Heart left ventricle (tissue), 16 donors: ENCODE measurements at regions of chr15 and their contacts with region 1.

Region 1: DNA sequence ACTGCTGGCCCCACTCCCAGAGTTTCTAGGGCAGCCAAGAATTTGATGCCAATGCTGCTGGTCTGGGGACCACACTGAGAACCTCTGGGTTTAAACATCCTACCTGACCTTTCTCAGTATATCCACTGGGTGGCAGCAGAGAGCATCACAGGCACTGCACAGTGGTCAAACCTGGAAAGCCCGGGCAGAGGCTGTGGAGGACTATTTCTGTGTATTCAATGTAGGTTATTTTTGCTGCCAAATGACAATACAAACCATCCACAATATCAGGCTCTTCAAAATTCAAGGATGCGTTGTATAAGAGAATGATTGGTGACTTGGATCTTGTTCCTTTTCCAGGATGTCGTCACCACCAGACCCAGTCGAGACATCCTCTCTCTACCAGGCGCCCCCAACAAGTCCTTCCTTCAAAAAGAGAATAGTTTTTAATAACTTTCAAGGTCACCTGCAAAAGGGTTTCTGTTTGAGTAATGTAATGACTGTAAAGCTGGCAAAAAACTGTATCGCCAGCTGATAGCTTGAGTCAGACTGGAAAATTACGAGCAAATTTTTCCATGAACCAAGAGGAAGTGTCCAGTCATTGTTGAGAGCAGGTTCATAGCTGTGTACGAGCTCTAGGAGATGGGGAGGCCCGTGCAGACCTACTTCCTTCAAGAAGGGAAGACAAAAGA is 30.5 kb upstream of the MYZAP start:
- DNase-seq: peak; percentile 70 to 82 (median 80)
- ATAC-seq: peak; percentile 84 to 92 (median 88)
- H3K4me3 ChIP-seq: peak overlapping the region in 5 of 12 donors; percentile 1 to 36 (median 18)
- H3K27ac ChIP-seq: peak overlapping the region; percentile 6 to 82 (median 72)
- H3K4me1 ChIP-seq: peaks cover 0 to 36% (median 20%) of the 10 kb centered on the region in 12 donors
- H3K27me3 ChIP-seq: no peaks in the 10 kb centered on the region
- CTCF ChIP-seq: peak; percentile 84 to 97 (median 93)
- POLR2A ChIP-seq: no peak

Region 2: GRCh38 chr15:57604507-57604906 is 43.3 kb after region 1 on chr15:
- intact Hi-C with region 1: loop called in 2 of 10 experiments (anchors 5 kb)
- DNase-seq: peak in 2 of 5 donors; percentile 68 to 78
- ATAC-seq: peak; percentile 12 to 72 (median 48)
- H3K4me3 ChIP-seq: peak overlapping the region in 3 of 12 donors; percentile 0 to 27 (median 11)
- H3K27ac ChIP-seq: peak overlapping the region; percentile 29 to 96 (median 92)
- H3K4me1 ChIP-seq: peaks cover 0 to 84% (median 23%) of the 10 kb centered on the region in 12 donors
- H3K27me3 ChIP-seq: no peaks in the 10 kb centered on the region
- CTCF ChIP-seq: no peak
- POLR2A ChIP-seq: no peak

Region 3: DNA sequence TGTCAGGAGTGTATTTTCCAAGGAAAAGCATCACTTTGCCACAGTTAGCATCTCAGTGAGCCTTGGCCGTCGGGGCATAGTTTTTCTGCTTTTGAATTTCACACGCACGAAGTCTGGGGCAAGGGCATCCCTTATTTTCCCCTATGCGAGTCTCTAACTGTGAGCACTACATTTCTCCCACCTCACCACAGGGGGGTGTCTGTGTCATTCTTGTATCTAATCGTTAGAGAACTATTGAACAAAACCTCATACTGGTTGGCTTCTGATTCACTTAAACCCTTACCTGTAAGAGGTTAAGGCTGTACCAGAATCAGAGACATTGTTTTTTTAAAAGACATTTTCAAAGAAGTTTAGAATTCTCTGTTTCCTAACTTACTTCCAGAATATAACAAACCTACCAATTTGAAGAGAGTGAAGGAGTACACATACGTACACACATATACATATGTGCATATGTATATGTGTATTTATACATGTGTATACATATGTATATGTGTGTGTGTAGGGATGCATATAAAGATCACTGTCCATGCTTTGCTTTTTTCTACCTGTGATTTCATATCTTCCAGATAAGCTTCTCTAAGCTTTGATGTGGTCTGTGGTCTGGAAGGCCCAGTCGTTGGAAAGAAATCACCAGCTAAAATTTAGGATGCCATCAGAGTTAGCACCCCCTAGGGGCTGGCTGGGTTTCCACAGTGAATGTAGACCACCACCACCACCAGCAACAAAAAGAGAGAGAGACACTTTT is 79.9 kb after region 1 on chr15:
- intact Hi-C with region 1: loop called in 6 of 10 experiments (anchors 5 kb)
- DNase-seq: no peak
- ATAC-seq: peak in 3 of 4 donors; percentile 28 to 57 (median 39)
- H3K4me3 ChIP-seq: no peak overlapping the region
- H3K27ac ChIP-seq: peak overlapping the region in 2 of 12 donors; percentile 7 to 82
- H3K4me1 ChIP-seq: peaks cover 0 to 41% (median 10%) of the 10 kb centered on the region in 12 donors
- H3K27me3 ChIP-seq: no peaks in the 10 kb centered on the region
- CTCF ChIP-seq: peak in 7 of 12 donors; percentile 9 to 39 (median 26)
- POLR2A ChIP-seq: no peak

Region 4: GRCh38 chr15:57706405-57707209 is 145.4 kb after region 1 on chr15 and contains the start of gene POLR2M:
- intact Hi-C with region 1: loop called in 7 of 10 experiments (anchors 2 to 10 kb)
- DNase-seq: peak; percentile 95 to 97 (median 97)
- ATAC-seq: peak; percentile 89 to 94 (median 94)
- H3K4me3 ChIP-seq: peak within 1 kb of the TSS; percentile 70 to 99 (median 88)
- H3K27ac ChIP-seq: peak within 1 kb of the TSS; percentile 91 to 99 (median 98)
- H3K4me1 ChIP-seq: peaks cover 4 to 43% (median 31%) of the 10 kb centered on the region in 12 donors
- H3K27me3 ChIP-seq: no peaks in the 10 kb centered on the region
- CTCF ChIP-seq: no peak
- POLR2A ChIP-seq: peak in 1 of 2 donors; percentile 65
- total RNA-seq, gene POLR2M: 23.6 to 243 (median 52.8) TPM

Region 5: DNA sequence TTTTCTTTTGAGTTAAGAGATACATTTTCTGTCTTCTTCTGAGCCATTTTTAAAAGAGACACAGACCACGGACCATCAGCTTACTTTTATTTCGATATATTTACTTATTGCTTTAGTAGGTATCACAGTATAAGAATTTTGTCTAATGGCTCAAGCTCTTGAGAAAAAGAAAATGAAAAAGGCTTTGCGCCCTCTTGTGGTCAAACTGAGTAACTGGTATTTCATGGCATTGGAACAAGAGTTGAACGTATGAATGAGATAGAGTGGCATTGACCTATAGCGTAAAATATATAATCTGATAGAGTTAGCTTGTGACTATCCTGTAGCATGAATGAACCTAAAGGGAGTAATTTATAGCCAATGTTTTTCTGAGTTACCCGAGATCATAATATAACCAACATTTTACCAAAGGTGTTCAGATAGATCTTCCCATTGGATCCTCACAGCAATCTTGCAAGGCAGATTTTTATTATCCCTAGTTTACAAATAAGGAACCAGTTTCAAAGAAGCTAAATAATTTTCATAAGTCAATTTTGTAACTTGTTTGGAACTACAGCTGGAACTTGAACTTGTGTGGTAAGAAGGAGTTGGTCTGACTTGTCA is 300.0 kb after region 1 on chr15:
- intact Hi-C with region 1: loop called in 9 of 10 experiments (anchors 2 to 10 kb)
- DNase-seq: peak in 2 of 5 donors; percentile 29 to 38
- ATAC-seq: peak in 2 of 4 donors; percentile 14 to 41
- H3K4me3 ChIP-seq: no peak overlapping the region
- H3K27ac ChIP-seq: no peak overlapping the region
- H3K4me1 ChIP-seq: peaks cover 0 to 9% (median 0%) of the 10 kb centered on the region in 12 donors
- H3K27me3 ChIP-seq: no peaks in the 10 kb centered on the region
- CTCF ChIP-seq: peak; percentile 72 to 92 (median 84)
- POLR2A ChIP-seq: no peak

Region 6: DNA sequence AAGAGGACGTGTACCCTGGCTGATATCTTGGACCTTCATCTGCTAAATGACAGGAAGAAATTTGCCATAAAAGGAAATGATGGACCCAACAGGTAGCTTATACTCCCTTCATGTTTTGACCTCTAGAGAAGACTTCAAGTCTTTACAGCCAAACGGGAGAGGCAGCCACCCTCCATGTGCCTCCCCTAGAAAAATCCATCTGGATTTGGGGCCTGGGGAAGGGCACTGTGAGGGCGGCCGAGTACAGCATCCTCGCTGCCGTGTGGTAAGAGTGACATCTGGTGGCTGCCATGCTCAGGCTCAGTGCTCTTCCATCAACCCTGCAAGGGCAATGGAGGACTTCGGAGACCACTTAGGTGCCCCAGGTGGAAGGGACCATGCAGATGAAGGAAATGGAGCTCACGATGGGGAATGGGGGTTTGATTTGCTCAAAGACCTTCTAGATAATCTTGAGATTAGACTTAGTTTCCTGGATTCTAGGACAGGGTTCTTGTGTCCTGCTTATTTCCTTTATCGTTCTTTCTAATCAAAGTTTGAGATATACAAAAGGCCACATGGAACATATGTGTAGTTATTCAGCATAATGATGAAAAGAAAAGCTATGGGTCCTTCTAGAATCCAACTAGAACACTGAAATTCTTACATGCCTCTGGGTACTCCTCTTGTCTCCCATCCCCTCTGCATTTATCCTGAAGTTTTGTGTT is 621.4 kb after region 1 on chr15:
- intact Hi-C with region 1: loop called in 2 of 10 experiments (anchors 10 kb)
- DNase-seq: peak; percentile 27 to 72 (median 40)
- ATAC-seq: peak; percentile 26 to 93 (median 90)
- H3K4me3 ChIP-seq: no peak overlapping the region
- H3K27ac ChIP-seq: no peak overlapping the region
- H3K4me1 ChIP-seq: peaks cover 0 to 3% (median 0%) of the 10 kb centered on the region in 12 donors
- H3K27me3 ChIP-seq: peaks cover 0 to 8% (median 0%) of the 10 kb centered on the region in 9 donors
- CTCF ChIP-seq: peak; percentile 57 to 84 (median 76)
- POLR2A ChIP-seq: no peak